ENCODE measurements at regions of chr17 and their contacts with region 1.

Region 1: DNA sequence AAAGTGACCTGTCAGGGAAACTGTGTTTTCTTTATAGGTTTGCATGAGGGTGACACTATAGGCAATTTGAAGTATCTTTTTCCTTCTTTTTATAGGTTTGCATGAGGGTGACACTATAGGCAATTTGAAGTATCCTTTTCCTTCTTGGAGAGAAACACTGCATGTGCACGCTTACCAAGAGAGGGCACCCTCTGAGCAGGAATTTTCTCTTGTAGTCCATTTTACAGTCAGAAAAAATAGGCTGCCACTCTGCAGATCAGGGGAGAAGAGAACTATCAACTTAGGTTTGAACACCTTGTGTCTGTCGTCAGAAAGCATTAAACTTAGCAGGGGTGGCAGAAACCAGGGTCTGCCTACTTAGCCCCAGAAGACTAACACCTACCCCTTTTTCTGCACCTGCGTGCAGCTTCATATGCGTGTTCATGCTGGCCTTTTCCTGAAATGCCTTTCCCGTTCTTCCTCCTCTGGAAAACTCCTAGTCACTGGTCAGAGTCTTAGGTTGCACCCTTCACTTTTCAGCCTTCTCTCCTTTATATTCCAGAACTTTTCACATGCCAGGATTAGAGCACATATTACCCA is 16.4 kb upstream of the SMIM36 start:
- DNase-seq: peak; percentile 55
- H3K4me3 Mint-ChIP-seq: no peak overlapping the region
- H3K27ac Mint-ChIP-seq: no peak overlapping the region
- H3K4me1 Mint-ChIP-seq: no peaks in the 10 kb centered on the region
- H3K27me3 Mint-ChIP-seq: no peaks in the 10 kb centered on the region
- CTCF ChIP-seq: peak; percentile 78

Region 2: GRCh38 chr17:55303701-55304145 is 223.9 kb before region 1 on chr17:
- CTCF ChIA-PET with region 1: no interaction called
- POLR2A ChIA-PET with region 1: no interaction called
- intact Hi-C with region 1: no loop called
- DNase-seq: no peak
- H3K4me3 Mint-ChIP-seq: no peak overlapping the region
- H3K27ac Mint-ChIP-seq: no peak overlapping the region
- H3K4me1 Mint-ChIP-seq: no peaks in the 10 kb centered on the region
- H3K27me3 Mint-ChIP-seq: no peaks in the 10 kb centered on the region
- CTCF ChIP-seq: no peak

Region 3: GRCh38 chr17:55549140-55549539 is 21.5 kb after region 1 on chr17:
- CTCF ChIA-PET with region 1: interaction called, 14 read pairs
- POLR2A ChIA-PET with region 1: no interaction called
- intact Hi-C with region 1: no loop called
- DNase-seq: peak; percentile 47
- H3K4me3 Mint-ChIP-seq: no peak overlapping the region
- H3K27ac Mint-ChIP-seq: no peak overlapping the region
- H3K4me1 Mint-ChIP-seq: peaks cover 16% of the 10 kb centered on the region
- H3K27me3 Mint-ChIP-seq: no peaks in the 10 kb centered on the region
- CTCF ChIP-seq: no peak

Region 4: GRCh38 chr17:55601874-55602364 is 74.3 kb after region 1 on chr17:
- CTCF ChIA-PET with region 1: interaction called, 231 read pairs
- POLR2A ChIA-PET with region 1: interaction called, 27 read pairs
- intact Hi-C with region 1: loop called (anchors 1 kb)
- DNase-seq: peak; percentile 57
- H3K4me3 Mint-ChIP-seq: no peak overlapping the region
- H3K27ac Mint-ChIP-seq: no peak overlapping the region
- H3K4me1 Mint-ChIP-seq: no peaks in the 10 kb centered on the region
- H3K27me3 Mint-ChIP-seq: no peaks in the 10 kb centered on the region
- CTCF ChIP-seq: peak; percentile 67

Region 5: GRCh38 chr17:55717898-55718735 is 190.5 kb after region 1 on chr17:
- CTCF ChIA-PET with region 1: interaction called, 112 read pairs
- POLR2A ChIA-PET with region 1: no interaction called
- intact Hi-C with region 1: loop called (anchors 1 kb)
- DNase-seq: peak; percentile 80
- H3K4me3 Mint-ChIP-seq: no peak overlapping the region
- H3K27ac Mint-ChIP-seq: no peak overlapping the region
- H3K4me1 Mint-ChIP-seq: peaks cover 10% of the 10 kb centered on the region
- H3K27me3 Mint-ChIP-seq: no peaks in the 10 kb centered on the region
- CTCF ChIP-seq: peak; percentile 62

Region 6: GRCh38 chr17:55750750-55751657 is 223.4 kb after region 1 on chr17 and contains the start of gene PCTP:
- CTCF ChIA-PET with region 1: interaction called, 11 read pairs
- POLR2A ChIA-PET with region 1: no interaction called
- intact Hi-C with region 1: no loop called
- DNase-seq: peak; percentile 96
- H3K4me3 Mint-ChIP-seq: peak within 1 kb of the TSS; percentile 80
- H3K27ac Mint-ChIP-seq: peak within 1 kb of the TSS; percentile 63
- H3K4me1 Mint-ChIP-seq: peaks cover 19% of the 10 kb centered on the region
- H3K27me3 Mint-ChIP-seq: no peaks in the 10 kb centered on the region
- CTCF ChIP-seq: peak; percentile 49
- total RNA-seq, gene PCTP: 10.2 and 11.9 TPM in 2 replicates

Region 7: GRCh38 chr17:55816532-55817396 is 289.1 kb after region 1 on chr17:
- CTCF ChIA-PET with region 1: interaction called, 14 read pairs
- POLR2A ChIA-PET with region 1: no interaction called
- intact Hi-C with region 1: no loop called
- DNase-seq: no peak
- H3K4me3 Mint-ChIP-seq: no peak overlapping the region
- H3K27ac Mint-ChIP-seq: no peak overlapping the region
- H3K4me1 Mint-ChIP-seq: peaks cover 12% of the 10 kb centered on the region
- H3K27me3 Mint-ChIP-seq: no peaks in the 10 kb centered on the region
- CTCF ChIP-seq: no peak

Region 8: GRCh38 chr17:56319517-56319916 is 791.9 kb after region 1 on chr17:
- CTCF ChIA-PET with region 1: interaction called, 9 read pairs
- POLR2A ChIA-PET with region 1: no interaction called
- intact Hi-C with region 1: loop called (anchors 2 kb)
- DNase-seq: peak; percentile 68
- H3K4me3 Mint-ChIP-seq: no peak overlapping the region
- H3K27ac Mint-ChIP-seq: no peak overlapping the region
- H3K4me1 Mint-ChIP-seq: no peaks in the 10 kb centered on the region
- H3K27me3 Mint-ChIP-seq: peaks cover 12% of the 10 kb centered on the region
- CTCF ChIP-seq: peak; percentile 55